Common myeloid progenitor, CD34-positive (primary cell): ENCODE measurements at regions of chr5 and their contacts with region 1.

Region 1: GRCh38 chr5:171342362-171343111 is 33.5 kb downstream of the TLX3 start:
- DNase-seq: peak; percentile 65 to 83 (median 77)
- H3K4me3 ChIP-seq: no peak overlapping the region
- H3K27ac ChIP-seq: no peak overlapping the region
- H3K4me1 ChIP-seq: no peaks in the 10 kb centered on the region
- H3K27me3 ChIP-seq: peaks cover 0 to 13% (median 5%) of the 10 kb centered on the region in 5 experiments

Region 2: GRCh38 chr5:171207256-171207847 is 135.2 kb before region 1 on chr5:
- CTCF ChIA-PET with region 1: interaction called, 18 read pairs
- POLR2A ChIA-PET with region 1: no interaction called
- DNase-seq: peak; percentile 65 to 73 (median 68)
- H3K4me3 ChIP-seq: no peak overlapping the region
- H3K27ac ChIP-seq: no peak overlapping the region
- H3K4me1 ChIP-seq: peaks cover 0 to 2% (median 0%) of the 10 kb centered on the region in 4 experiments
- H3K27me3 ChIP-seq: no peaks in the 10 kb centered on the region

Region 3: GRCh38 chr5:171288066-171288465 is 54.5 kb before region 1 on chr5:
- CTCF ChIA-PET with region 1: no interaction called
- POLR2A ChIA-PET with region 1: no interaction called
- DNase-seq: no peak
- H3K4me3 ChIP-seq: no peak overlapping the region
- H3K27ac ChIP-seq: no peak overlapping the region
- H3K4me1 ChIP-seq: no peaks in the 10 kb centered on the region
- H3K27me3 ChIP-seq: no peaks in the 10 kb centered on the region

Region 4: DNA sequence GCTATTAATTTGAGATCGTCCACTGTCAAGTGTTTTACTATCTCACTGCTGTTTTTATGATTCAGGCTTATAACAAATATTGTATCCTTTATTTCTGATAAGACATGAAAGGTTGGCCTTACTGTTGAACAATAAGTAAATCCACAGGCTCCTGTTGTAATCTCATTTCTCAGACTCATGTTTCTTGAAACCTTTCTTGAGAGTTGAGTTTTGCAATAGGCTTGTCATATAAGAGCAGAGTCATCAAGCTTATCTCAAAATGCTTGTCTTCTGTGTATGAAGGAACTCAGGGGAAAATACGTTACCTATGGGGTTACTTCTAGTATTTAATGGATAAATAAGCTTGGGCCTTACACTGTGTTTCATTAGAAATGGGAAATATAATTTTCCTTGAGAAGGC is 42.7 kb before region 1 on chr5:
- CTCF ChIA-PET with region 1: no interaction called
- POLR2A ChIA-PET with region 1: no interaction called
- DNase-seq: no peak
- H3K4me3 ChIP-seq: no peak overlapping the region
- H3K27ac ChIP-seq: no peak overlapping the region
- H3K4me1 ChIP-seq: no peaks in the 10 kb centered on the region
- H3K27me3 ChIP-seq: peaks cover 4 to 22% (median 6%) of the 10 kb centered on the region in 5 experiments

Region 5: GRCh38 chr5:171355302-171355724 is 12.8 kb after region 1 on chr5:
- CTCF ChIA-PET with region 1: interaction called, 25 read pairs
- POLR2A ChIA-PET with region 1: interaction called, 3 read pairs
- DNase-seq: no peak
- H3K4me3 ChIP-seq: no peak overlapping the region
- H3K27ac ChIP-seq: no peak overlapping the region
- H3K4me1 ChIP-seq: no peaks in the 10 kb centered on the region
- H3K27me3 ChIP-seq: no peaks in the 10 kb centered on the region

Region 6: GRCh38 chr5:171365351-171365750 is 22.8 kb after region 1 on chr5:
- CTCF ChIA-PET with region 1: no interaction called
- POLR2A ChIA-PET with region 1: no interaction called
- DNase-seq: peak; percentile 32 to 44 (median 37)
- H3K4me3 ChIP-seq: no peak overlapping the region
- H3K27ac ChIP-seq: no peak overlapping the region
- H3K4me1 ChIP-seq: peaks cover 0 to 27% (median 9%) of the 10 kb centered on the region in 4 experiments
- H3K27me3 ChIP-seq: peaks cover 0 to 2% (median 0%) of the 10 kb centered on the region in 5 experiments

Region 7: GRCh38 chr5:171721464-171721863 is 378.9 kb after region 1 on chr5:
- CTCF ChIA-PET with region 1: no interaction called
- POLR2A ChIA-PET with region 1: no interaction called
- DNase-seq: peak; percentile 52 to 94 (median 90)
- H3K4me3 ChIP-seq: no peak overlapping the region
- H3K27ac ChIP-seq: peak overlapping the region in 1 of 2 experiments; percentile 1
- H3K4me1 ChIP-seq: peaks cover 7 to 24% (median 13%) of the 10 kb centered on the region in 4 experiments
- H3K27me3 ChIP-seq: no peaks in the 10 kb centered on the region